Heart right ventricle (tissue), 16 donors: ENCODE measurements at regions of chr1 and their contacts with region 1.

Region 1: GRCh38 chr1:44049839-44050238 is 18.6 kb upstream of the SLC6A9 start:
- DNase-seq: no peak
- ATAC-seq: no peak
- H3K4me3 ChIP-seq: no peak overlapping the region
- H3K27ac ChIP-seq: peak overlapping the region in 1 of 10 donors; percentile 67
- H3K4me1 ChIP-seq: peaks cover 0 to 32% (median 0%) of the 10 kb centered on the region in 9 donors
- H3K27me3 ChIP-seq: no peaks in the 10 kb centered on the region
- CTCF ChIP-seq: no peak

Region 2: GRCh38 chr1:44008259-44008658 is 41.6 kb before region 1 on chr1:
- intact Hi-C with region 1: loop called in 5 of 10 experiments (anchors 1 to 5 kb)
- DNase-seq: no peak
- ATAC-seq: no peak
- H3K4me3 ChIP-seq: no peak overlapping the region
- H3K27ac ChIP-seq: no peak overlapping the region
- H3K4me1 ChIP-seq: peaks cover 0 to 6% (median 3%) of the 10 kb centered on the region in 9 donors
- H3K27me3 ChIP-seq: no peaks in the 10 kb centered on the region
- CTCF ChIP-seq: no peak

Region 3: DNA sequence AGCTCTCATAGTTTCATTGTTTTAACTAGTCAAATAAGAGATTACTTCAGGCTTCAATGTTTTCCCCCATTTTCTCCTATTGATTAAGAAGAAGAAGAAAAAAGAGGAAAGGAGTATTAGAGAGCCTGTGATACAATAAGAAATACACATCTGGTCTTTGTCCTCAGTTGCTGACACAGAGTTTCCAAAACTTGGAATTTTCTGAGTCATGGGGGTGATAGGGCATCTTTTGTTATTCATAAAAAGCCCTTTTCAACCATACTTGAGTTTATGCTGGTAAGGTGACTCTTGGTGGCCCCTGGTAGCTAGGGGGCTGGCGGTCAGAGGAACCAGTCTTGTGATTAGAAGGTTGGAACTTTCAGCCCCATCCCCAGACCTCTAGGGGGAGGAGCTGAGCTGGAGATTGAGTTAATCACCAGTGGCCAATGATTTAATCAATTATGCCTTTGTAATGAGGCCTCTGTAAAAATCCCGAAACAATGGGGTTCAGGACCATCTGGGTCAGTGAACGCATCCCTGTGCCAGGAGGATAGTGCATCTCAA is 120.5 kb after region 1 on chr1:
- intact Hi-C with region 1: no loop called
- DNase-seq: no peak
- ATAC-seq: no peak
- H3K4me3 ChIP-seq: no peak overlapping the region
- H3K27ac ChIP-seq: no peak overlapping the region
- H3K4me1 ChIP-seq: no peaks in the 10 kb centered on the region
- H3K27me3 ChIP-seq: peaks cover 0 to 18% (median 12%) of the 10 kb centered on the region in 7 donors
- CTCF ChIP-seq: no peak